Transverse colon (tissue), 4 donors: ENCODE measurements at regions of chr12 and their contacts with region 1.

Region 1: DNA sequence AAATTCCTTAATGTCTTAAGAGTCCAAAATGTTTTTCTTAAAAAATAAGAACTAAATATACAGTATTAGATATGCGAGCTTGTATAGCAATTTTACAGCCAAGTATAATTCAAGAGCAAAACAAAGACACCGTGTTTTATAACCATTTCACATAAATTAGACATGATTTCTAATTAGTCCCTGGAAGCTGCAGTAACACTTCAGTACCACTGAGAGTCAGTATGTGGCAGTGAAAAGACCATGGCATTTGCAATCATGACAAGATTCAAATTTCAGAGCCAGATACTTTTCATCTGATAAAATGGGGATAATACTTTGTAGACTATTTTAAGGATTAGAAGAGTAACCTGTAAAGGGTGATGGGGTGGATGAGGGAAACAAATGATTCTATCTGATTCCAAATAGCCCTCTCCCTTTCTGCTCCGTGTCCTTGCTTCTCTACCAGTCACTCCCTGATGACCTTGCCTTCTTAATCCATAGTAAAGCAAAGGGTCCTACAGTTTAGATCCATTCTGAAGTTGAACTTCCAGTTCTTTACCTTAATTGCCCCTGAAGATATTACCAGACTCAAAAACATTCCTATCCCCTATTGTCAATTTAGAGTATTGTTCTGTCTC is 145.4 kb upstream of the ABCD2 start:
- DNase-seq: no peak
- H3K4me3 ChIP-seq: no peak overlapping the region
- H3K27ac ChIP-seq: no peak overlapping the region
- H3K4me1 ChIP-seq: no peaks in the 10 kb centered on the region
- H3K27me3 ChIP-seq: no peaks in the 10 kb centered on the region
- CTCF ChIP-seq: peak; percentile 70 to 84 (median 82)
- EP300 ChIP-seq: no peak
- POLR2A ChIP-seq: no peak

Region 2: DNA sequence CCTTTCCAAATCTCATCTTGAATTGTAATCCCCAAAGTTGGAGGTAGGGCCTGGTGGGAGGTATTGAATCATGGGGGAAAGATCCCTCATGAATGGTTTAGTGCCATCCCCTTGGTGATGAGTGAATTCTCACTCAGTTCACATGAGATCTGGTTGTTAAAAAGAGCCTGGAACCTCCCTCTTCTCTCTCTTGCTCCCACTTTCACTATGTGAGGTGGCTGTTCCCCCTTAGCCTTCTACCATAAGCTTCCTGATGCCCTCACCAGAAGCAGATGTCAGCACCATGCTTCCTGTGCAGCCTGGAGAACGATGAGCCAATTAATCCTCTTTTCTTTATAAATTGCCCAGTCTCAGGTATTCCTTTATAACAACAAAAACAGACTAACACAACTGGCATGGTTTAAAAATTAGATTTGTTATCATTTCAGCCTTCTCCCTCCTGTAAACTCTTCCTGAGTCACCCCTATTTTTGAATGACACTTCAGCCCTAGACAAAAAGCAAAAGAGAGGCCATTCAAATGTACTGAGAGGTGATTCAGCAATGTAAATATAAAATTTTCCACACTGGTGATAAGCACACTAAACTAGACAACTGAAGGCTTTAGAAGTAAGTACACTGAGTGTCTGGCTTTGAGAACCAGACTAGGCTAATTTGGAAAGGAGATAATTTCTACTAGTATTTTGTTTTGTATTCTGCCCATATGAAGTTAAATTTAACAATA is 66.7 kb after region 1 on chr12:
- in situ Hi-C with region 1: no loop called
- intact Hi-C with region 1: loop called (anchors 2 kb)
- DNase-seq: no peak
- H3K4me3 ChIP-seq: no peak overlapping the region
- H3K27ac ChIP-seq: no peak overlapping the region
- H3K4me1 ChIP-seq: peaks cover 0 to 15% (median 3%) of the 10 kb centered on the region in 4 donors
- H3K27me3 ChIP-seq: no peaks in the 10 kb centered on the region
- CTCF ChIP-seq: no peak
- EP300 ChIP-seq: no peak
- POLR2A ChIP-seq: no peak

Region 3: DNA sequence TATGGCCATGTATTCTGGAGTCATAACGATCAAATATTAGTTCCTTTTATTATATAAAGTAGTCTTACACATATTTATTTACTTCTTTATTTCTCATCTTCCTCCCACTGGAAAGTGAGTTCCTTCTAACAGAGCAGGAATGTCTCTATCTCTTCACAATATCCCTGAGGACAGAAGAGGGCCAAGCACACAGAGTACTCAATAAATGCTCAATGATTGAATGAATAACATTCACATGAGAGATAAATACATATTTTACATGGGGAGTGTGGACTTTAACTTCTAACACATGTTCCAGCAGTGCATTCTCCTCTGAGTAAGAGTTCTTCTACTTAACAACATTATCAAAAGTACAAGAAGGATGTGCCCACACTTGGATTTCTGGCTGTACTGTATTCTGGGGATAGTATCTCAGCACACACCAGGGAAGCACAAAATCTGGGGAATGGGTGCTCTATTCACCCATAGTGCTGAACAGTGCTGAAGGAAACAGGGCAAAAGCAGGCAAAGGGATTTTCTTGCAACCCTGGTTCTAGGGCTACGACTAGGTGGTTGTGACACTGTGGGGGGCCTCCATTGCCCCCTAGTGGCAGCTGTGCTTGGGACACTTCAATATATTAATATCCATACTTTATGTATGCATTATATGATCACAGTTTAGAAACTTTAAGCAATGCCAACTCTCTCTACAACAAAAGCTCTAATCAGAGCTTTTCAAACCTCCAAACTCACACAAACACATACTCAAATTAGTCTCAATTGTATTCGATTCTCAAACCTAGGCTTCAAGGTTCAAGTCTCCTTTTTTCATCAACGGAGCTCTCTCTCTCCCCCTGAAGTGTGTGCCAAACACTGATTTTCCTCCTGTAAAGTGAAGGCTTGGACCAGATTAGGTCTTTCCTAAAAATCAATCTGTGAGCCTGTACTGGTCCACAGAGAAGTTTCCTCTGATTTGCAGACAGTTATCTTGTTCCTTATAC is 225.4 kb after region 1 on chr12:
- in situ Hi-C with region 1: loop called in 1 of 4 experiments (anchors 25 kb)
- intact Hi-C with region 1: loop called (anchors 10 kb)
- DNase-seq: peak; percentile 66
- H3K4me3 ChIP-seq: no peak overlapping the region
- H3K27ac ChIP-seq: no peak overlapping the region
- H3K4me1 ChIP-seq: peaks cover 0 to 16% (median 5%) of the 10 kb centered on the region in 4 donors
- H3K27me3 ChIP-seq: no peaks in the 10 kb centered on the region
- CTCF ChIP-seq: peak; percentile 71 to 85 (median 79)
- EP300 ChIP-seq: no peak
- POLR2A ChIP-seq: no peak

Region 4: GRCh38 chr12:40010899-40011774 is 246.1 kb after region 1 on chr12:
- in situ Hi-C with region 1: loop called in 2 of 4 experiments (anchors 10 to 25 kb)
- intact Hi-C with region 1: no loop called
- DNase-seq: peak; percentile 63
- H3K4me3 ChIP-seq: no peak overlapping the region
- H3K27ac ChIP-seq: peak overlapping the region; percentile 23 to 46 (median 28)
- H3K4me1 ChIP-seq: peaks cover 15 to 47% (median 34%) of the 10 kb centered on the region in 4 donors
- H3K27me3 ChIP-seq: no peaks in the 10 kb centered on the region
- CTCF ChIP-seq: peak in 4 of 5 experiments; percentile 40 to 87 (median 78)
- EP300 ChIP-seq: no peak
- POLR2A ChIP-seq: no peak

Region 5: DNA sequence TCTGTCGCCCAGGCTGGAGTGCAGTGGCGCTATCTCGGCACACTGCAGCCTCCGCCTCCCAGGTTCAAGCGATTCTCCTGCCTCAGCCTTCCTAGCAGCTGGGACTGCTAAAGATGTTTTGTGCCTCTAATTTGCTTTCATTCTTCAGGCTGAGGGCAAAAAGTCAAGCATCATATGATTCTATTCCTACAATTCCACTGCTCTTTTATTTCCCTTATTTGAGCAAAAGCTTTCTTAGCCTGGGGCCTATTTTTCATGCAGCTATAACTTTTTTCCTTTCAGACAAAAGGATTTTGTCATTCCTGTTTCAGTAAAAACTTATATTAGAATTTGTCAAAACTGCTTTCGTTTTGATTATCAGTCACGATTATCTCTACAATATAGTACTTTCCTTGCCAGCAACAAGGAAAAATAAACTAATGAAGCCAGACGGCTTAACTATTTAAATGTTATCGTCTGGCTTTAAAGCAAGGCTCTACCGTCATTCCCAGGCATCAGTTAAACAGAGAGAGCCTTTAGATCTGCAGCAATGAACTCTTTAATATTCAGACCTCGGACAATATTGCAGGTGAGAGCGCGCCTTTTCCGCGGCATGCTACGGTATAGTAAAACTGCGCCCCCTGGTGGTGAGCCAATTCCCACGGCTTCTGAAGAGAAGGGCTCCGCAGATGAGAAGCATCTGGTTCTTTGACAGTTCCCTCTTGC is 342.2 kb after region 1 on chr12:
- in situ Hi-C with region 1: loop called (anchors 10 to 25 kb)
- intact Hi-C with region 1: loop called (anchors 10 kb)
- DNase-seq: peak; percentile 93
- H3K4me3 ChIP-seq: peak overlapping the region in 3 of 4 donors; percentile 26 to 52 (median 31)
- H3K27ac ChIP-seq: peak overlapping the region; percentile 91 to 97 (median 94)
- H3K4me1 ChIP-seq: peaks cover 0 to 41% (median 28%) of the 10 kb centered on the region in 4 donors
- H3K27me3 ChIP-seq: no peaks in the 10 kb centered on the region
- CTCF ChIP-seq: peak; percentile 89 to 95 (median 93)
- EP300 ChIP-seq: no peak
- POLR2A ChIP-seq: no peak

Region 6: GRCh38 chr12:40117818-40118217 is 352.8 kb after region 1 on chr12:
- in situ Hi-C with region 1: loop called (anchors 10 to 25 kb)
- intact Hi-C with region 1: no loop called
- DNase-seq: no peak
- H3K4me3 ChIP-seq: no peak overlapping the region
- H3K27ac ChIP-seq: no peak overlapping the region
- H3K4me1 ChIP-seq: no peaks in the 10 kb centered on the region
- H3K27me3 ChIP-seq: no peaks in the 10 kb centered on the region
- CTCF ChIP-seq: no peak
- EP300 ChIP-seq: no peak
- POLR2A ChIP-seq: no peak